ENCODE measurements at regions of chr12 and their contacts with region 1.

Region 1: GRCh38 chr12:12916135-12916944 is 25.0 kb downstream of the GPRC5A start:
- DNase-seq: peak; percentile 78 to 85 (median 82)
- ATAC-seq: peak; percentile 97 to 99 (median 98)
- H3K4me3 ChIP-seq: no peak overlapping the region
- H3K27ac ChIP-seq: no peak overlapping the region
- H3K4me1 ChIP-seq: peaks cover 0 to 4% (median 0%) of the 10 kb centered on the region in 4 donors
- H3K27me3 ChIP-seq: no peaks in the 10 kb centered on the region
- CTCF ChIP-seq: peak; percentile 96 to 99 (median 98)
- POLR2A ChIP-seq: no peak

Region 2: DNA sequence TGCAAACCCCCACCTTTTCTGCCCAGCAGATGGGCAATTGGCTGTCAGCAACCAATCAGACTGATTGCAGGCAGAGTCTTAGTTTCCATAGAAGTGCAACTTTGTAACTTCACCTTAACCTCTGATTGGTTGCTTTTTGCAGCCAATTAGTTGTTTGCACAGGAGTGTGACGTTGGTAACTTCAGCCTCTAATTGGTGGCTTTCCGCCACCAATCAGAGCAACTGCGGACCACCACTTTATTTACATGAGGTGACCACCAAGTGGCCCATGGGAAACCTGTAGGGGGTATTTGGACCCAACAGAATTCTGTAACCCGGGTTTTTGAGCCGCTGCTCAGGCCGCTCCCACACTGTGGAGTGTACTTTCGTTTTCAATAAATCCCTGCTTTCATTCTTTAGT is 166.9 kb before region 1 on chr12:
- intact Hi-C with region 1: no loop called
- DNase-seq: no peak
- ATAC-seq: peak in 1 of 4 donors; percentile 40
- H3K4me3 ChIP-seq: no peak overlapping the region
- H3K27ac ChIP-seq: no peak overlapping the region
- H3K4me1 ChIP-seq: no peaks in the 10 kb centered on the region
- H3K27me3 ChIP-seq: no peaks in the 10 kb centered on the region
- CTCF ChIP-seq: no peak
- POLR2A ChIP-seq: no peak

Region 3: GRCh38 chr12:12975322-12976077 is 59.2 kb after region 1 on chr12:
- intact Hi-C with region 1: loop called (anchors 10 kb)
- DNase-seq: no peak
- ATAC-seq: peak; percentile 51 to 76 (median 66)
- H3K4me3 ChIP-seq: no peak overlapping the region
- H3K27ac ChIP-seq: no peak overlapping the region
- H3K4me1 ChIP-seq: no peaks in the 10 kb centered on the region
- H3K27me3 ChIP-seq: no peaks in the 10 kb centered on the region
- CTCF ChIP-seq: peak; percentile 12 to 40 (median 28)
- POLR2A ChIP-seq: no peak

Region 4: DNA sequence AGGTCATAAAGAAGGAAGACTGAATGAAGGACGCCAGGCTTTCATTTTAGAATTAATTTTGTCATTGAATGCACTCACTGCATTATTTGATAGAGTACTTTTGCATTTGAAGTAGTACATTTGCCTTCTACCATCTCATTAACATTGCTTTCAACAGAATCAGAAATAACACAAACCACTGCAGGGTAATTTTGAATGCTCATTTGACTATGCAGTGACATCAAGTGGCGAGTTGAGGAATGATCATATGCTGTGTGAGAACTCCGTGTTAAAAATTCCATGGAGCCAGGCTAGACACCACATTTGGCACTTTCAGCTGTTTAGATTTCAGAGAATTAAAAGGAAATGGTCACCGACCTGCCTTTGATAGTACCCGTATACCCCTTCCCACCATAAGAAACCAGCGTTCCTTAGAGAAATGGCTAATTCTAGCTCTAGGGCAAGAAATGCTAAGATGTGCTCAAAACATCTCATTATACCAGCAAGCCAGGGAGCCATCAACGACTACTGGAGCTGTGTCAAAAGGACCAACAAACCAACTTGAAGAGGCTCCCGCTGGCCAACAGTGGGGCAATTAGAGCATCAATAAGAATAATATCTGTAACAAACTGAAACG is 67.2 kb after region 1 on chr12:
- intact Hi-C with region 1: loop called (anchors 10 kb)
- DNase-seq: peak in 1 of 3 donors; percentile 23
- ATAC-seq: peak; percentile 79 to 82 (median 82)
- H3K4me3 ChIP-seq: no peak overlapping the region
- H3K27ac ChIP-seq: no peak overlapping the region
- H3K4me1 ChIP-seq: no peaks in the 10 kb centered on the region
- H3K27me3 ChIP-seq: no peaks in the 10 kb centered on the region
- CTCF ChIP-seq: peak; percentile 55 to 64 (median 58)
- POLR2A ChIP-seq: no peak

Region 5: GRCh38 chr12:13211859-13212664 is 295.7 kb after region 1 on chr12:
- intact Hi-C with region 1: loop called (anchors 10 kb)
- DNase-seq: peak in 1 of 3 donors; percentile 64
- ATAC-seq: peak; percentile 80 to 88 (median 85)
- H3K4me3 ChIP-seq: no peak overlapping the region
- H3K27ac ChIP-seq: no peak overlapping the region
- H3K4me1 ChIP-seq: no peaks in the 10 kb centered on the region
- H3K27me3 ChIP-seq: no peaks in the 10 kb centered on the region
- CTCF ChIP-seq: peak; percentile 76 to 91 (median 88)
- POLR2A ChIP-seq: no peak

Measured in right lobe of liver (tissue), 6 donors.